Thyroid gland (tissue), 4 donors: ENCODE measurements at regions of chr6 and their contacts with region 1.

Region 1: GRCh38 chr6:40328405-40328987 is 258.7 kb downstream of the LRFN2 start:
- DNase-seq: peak; percentile 71 to 73
- H3K4me3 ChIP-seq: no peak overlapping the region
- H3K27ac ChIP-seq: no peak overlapping the region
- H3K4me1 ChIP-seq: no peaks in the 10 kb centered on the region
- H3K27me3 ChIP-seq: no peaks in the 10 kb centered on the region
- CTCF ChIP-seq: peak; percentile 48 to 94 (median 85)
- POLR2A ChIP-seq: no peak

Region 2: GRCh38 chr6:39923414-39923813 is 405.1 kb before region 1 on chr6:
- intact Hi-C with region 1: no loop called
- DNase-seq: peak; percentile 98 to 99
- H3K4me3 ChIP-seq: no peak overlapping the region
- H3K27ac ChIP-seq: peak overlapping the region; percentile 38 to 74 (median 59)
- H3K4me1 ChIP-seq: peaks cover 19 to 43% of the 10 kb centered on the region in 2 donors
- H3K27me3 ChIP-seq: no peaks in the 10 kb centered on the region
- CTCF ChIP-seq: no peak
- POLR2A ChIP-seq: no peak

Region 3: GRCh38 chr6:40376113-40376650 is 47.7 kb after region 1 on chr6:
- intact Hi-C with region 1: no loop called
- DNase-seq: no peak
- H3K4me3 ChIP-seq: no peak overlapping the region
- H3K27ac ChIP-seq: no peak overlapping the region
- H3K4me1 ChIP-seq: no peaks in the 10 kb centered on the region
- H3K27me3 ChIP-seq: no peaks in the 10 kb centered on the region
- CTCF ChIP-seq: no peak
- POLR2A ChIP-seq: no peak

Region 4: GRCh38 chr6:40587240-40588069 is 259.0 kb after region 1 on chr6 and contains the start of gene LRFN2:
- intact Hi-C with region 1: loop called (anchors 5 kb)
- DNase-seq: peak; percentile 81 to 84
- H3K4me3 ChIP-seq: peak within 1 kb of the TSS in 2 of 3 donors; percentile 29 to 30
- H3K27ac ChIP-seq: peak within 1 kb of the TSS in 2 of 3 donors; percentile 46 to 57
- H3K4me1 ChIP-seq: peaks cover 7 to 25% of the 10 kb centered on the region in 2 donors
- H3K27me3 ChIP-seq: no peaks in the 10 kb centered on the region
- CTCF ChIP-seq: peak; percentile 37 to 89 (median 72)
- POLR2A ChIP-seq: no peak
- total RNA-seq, gene LRFN2: 0.13 TPM in 1 of 4 donors, not detected in the others

Region 5: DNA sequence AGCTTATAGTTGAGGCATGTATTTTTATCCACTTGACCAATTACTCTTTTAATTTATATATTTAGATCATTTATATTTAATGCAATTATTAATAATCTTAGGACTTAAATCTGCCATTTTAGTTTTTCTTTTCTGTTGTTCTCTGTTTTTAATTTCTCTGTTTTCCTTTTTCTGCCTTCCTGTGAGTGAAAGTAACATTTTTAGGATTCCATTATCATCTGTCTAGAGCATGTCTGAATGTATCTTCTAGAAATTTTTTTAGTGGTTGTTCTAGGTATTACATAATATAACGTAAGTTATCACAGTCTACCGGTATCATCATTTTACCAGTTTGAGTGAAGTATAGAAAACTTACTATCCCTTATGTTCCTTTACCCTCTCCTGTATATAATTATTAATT is 513.2 kb after region 1 on chr6:
- intact Hi-C with region 1: loop called (anchors 5 kb)
- DNase-seq: no peak
- H3K4me3 ChIP-seq: no peak overlapping the region
- H3K27ac ChIP-seq: no peak overlapping the region
- H3K4me1 ChIP-seq: no peaks in the 10 kb centered on the region
- H3K27me3 ChIP-seq: no peaks in the 10 kb centered on the region
- CTCF ChIP-seq: no peak
- POLR2A ChIP-seq: no peak